HEK293 (cell line): ENCODE measurements at regions of chr12 and their contacts with region 1.

Region 1: DNA sequence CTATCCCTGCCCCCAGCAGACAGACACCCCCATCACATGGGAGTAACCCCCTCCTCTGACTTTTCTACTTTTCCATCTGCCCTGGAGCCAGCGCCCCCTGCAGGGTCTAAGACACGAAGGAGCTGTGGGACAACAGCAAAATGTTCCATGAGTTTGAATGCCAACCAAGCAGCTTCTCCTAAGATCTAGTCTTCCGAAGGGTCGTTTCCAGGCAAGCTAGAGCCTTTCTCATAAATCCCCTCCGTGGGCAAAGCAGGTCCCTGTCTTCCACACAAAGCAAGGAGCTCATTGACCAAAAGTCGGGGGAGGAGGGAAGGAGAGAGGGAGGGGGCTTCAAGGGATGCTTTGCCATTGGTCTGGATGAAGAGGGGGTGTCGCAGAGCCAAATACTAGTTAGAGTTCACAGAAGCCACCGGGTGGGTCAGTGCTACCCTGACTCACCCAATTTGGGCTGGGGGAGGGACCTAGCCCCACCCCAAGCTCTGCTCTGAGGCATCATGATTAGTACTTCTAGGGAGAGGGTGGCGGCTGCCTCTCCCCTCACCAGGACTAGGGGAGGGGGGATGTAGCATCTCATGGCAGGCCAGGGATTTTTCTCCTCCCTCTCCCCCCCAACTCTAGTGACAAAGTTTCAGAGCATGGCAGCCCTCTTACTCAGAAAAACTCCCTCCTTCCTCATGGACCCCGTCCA is 1.6 kb downstream of the MSI1 start:
- H3K4me3 ChIP-seq: peak overlapping the region; percentile 61
- H3K27ac ChIP-seq: peak overlapping the region; percentile 38; the same call in 1 of the 2 replicates
- H3K4me1 ChIP-seq: 0 out of 2 replicates have a peak, but pooled peaks cover 2% of the 10 kb centered on the region
- CTCF ChIP-seq: peak; percentile 74

Region 2: GRCh38 chr12:120356567-120357030 is 10.8 kb before region 1 on chr12:
- CTCF ChIA-PET with region 1: interaction called, 66 read pairs
- POLR2A ChIA-PET with region 1: interaction called, 3 read pairs
- H3K4me3 ChIP-seq: no peak overlapping the region
- H3K27ac ChIP-seq: no peak overlapping the region
- H3K4me1 ChIP-seq: no peaks in the 10 kb centered on the region
- CTCF ChIP-seq: peak; percentile 86

Region 3: GRCh38 chr12:120381752-120382419 is 14.5 kb after region 1 on chr12:
- CTCF ChIA-PET with region 1: interaction called, 26 read pairs
- POLR2A ChIA-PET with region 1: interaction called, 8 read pairs
- H3K4me3 ChIP-seq: no peak overlapping the region
- H3K27ac ChIP-seq: 0 out of 2 replicates have a peak overlapping the region, but pooled peaks have one; percentile 44
- H3K4me1 ChIP-seq: peaks cover 18% of the 10 kb centered on the region
- CTCF ChIP-seq: no peak

Region 4: DNA sequence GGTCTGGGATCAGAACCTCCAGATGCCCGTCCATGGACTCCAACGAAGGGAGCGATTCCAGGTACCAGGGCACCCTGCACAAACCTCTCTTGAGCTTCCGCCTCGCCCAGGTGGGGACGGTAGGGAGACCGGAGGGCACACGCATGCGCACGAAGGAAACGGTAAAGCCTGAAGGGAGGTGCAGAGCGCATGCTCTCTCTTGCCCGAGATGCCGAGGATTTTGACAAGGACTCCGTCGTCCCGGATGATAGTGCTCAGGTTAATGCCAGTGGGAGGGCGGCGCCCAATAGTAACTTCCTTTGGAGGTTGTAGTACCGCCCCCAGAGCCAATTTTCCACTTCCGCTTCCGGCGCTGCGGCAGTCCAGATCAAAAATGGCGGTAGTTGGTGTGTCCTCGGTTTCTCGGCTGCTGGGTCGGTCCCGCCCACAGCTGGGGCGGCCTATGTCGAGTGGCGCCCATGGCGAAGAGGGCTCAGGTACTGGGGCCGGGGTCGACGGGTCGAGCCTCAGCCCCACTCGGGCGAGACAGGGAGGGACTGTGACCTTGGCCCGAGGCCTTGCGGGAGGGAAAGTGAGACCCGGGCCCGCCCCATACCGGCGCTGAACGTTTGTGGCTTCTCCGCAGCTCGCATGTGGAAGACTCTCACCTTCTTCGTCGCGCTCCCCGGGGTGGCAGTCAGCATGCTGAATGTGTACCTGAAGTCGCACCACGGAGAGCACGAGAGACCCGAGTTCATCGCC is 70.5 kb after region 1 on chr12 and contains the start of gene COX6A1:
- CTCF ChIA-PET with region 1: interaction called, 20 read pairs
- POLR2A ChIA-PET with region 1: interaction called, 4 read pairs
- H3K4me3 ChIP-seq: peak within 1 kb of the TSS; percentile 90
- H3K27ac ChIP-seq: peak within 1 kb of the TSS; percentile 75
- H3K4me1 ChIP-seq: no peaks in the 10 kb centered on the region
- CTCF ChIP-seq: peak; percentile 35; the same call in 1 of the 2 replicates